Activated B cell treated with CpG ODN at 0.5 μM for 24 hours (primary cell): ENCODE measurements at regions of chr17 and their contacts with region 1.

Region 1: DNA sequence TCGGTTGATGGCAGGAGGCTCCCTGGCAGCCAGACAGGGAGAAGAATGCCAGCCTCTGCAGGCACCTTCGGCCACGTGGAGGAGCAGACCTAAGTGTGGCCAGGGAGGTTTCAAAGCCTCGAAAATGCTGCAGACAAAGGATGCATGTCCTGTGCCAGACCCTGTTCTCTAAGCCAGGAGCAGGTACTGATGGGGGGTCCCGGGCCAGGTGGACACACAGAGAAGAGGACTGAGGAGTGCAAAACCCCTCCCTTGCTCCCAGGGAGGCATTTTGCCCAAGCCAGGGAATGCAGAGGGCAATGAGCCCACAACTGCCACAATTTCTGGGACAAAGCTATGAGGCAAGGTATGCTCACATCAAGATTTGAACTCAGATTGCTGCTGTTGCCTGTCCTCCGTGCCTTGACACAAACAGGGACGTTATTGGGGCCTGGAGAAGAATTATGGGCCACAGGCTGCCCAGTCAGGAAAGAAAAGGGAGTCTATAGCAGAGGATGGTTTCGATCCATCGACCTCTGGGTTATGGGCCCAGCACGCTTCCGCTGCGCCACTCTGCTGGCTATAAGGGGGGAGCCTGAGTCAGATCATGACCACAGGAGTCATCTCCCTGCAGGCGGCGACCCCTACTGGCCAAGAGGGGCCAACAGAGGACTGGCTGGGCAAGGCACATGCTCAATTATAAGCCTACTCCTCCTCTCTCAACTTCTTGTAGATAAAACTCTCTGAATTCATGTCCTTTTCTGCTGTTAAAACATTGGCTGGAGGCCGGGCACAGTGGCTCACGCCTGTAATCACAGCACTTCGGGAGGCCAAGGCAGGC is 25.1 kb upstream of the FOXK2 start:
- DNase-seq: peak; percentile 88
- ATAC-seq: peak; percentile 78
- H3K4me3 Mint-ChIP-seq: peak overlapping the region; percentile 75
- H3K27ac Mint-ChIP-seq: peak overlapping the region; percentile 93
- H3K4me1 Mint-ChIP-seq: peaks cover 26% of the 10 kb centered on the region
- H3K27me3 Mint-ChIP-seq: no peaks in the 10 kb centered on the region
- CTCF ChIP-seq: no peak

Region 2: DNA sequence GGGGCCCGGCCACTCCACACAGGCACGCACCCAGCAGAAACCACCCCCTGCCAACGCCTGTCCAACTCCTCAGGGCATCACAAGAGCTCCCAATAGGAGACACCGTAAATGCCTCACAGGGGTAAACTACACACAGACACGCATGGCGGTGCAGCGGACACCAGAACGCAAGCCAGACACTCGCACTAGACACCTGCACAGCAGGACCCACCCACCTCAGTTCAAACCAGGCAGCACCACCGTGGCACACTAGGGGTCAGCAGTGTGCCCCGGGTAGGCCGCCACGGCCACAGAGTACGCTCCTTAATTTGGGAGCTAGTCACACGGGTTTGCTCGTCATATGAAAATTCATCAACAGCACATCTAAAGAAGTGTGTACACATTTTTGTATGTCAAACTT is 1202.8 kb before region 1 on chr17:
- CTCF ChIA-PET with region 1: no interaction called
- POLR2A ChIA-PET with region 1: no interaction called
- intact Hi-C with region 1: no loop called
- DNase-seq: peak; percentile 70
- ATAC-seq: peak; percentile 74
- H3K4me3 Mint-ChIP-seq: peak overlapping the region; percentile 55
- H3K27ac Mint-ChIP-seq: no peak overlapping the region
- H3K4me1 Mint-ChIP-seq: peaks cover 45% of the 10 kb centered on the region
- H3K27me3 Mint-ChIP-seq: no peaks in the 10 kb centered on the region
- CTCF ChIP-seq: peak; percentile 76

Region 3: GRCh38 chr17:82292251-82293154 is 201.9 kb before region 1 on chr17:
- CTCF ChIA-PET with region 1: no interaction called
- POLR2A ChIA-PET with region 1: interaction called, 3 read pairs
- intact Hi-C with region 1: loop called (anchors 10 kb)
- DNase-seq: peak; percentile 81
- ATAC-seq: peak; percentile 91
- H3K4me3 Mint-ChIP-seq: peak overlapping the region; percentile 87
- H3K27ac Mint-ChIP-seq: peak overlapping the region; percentile 84
- H3K4me1 Mint-ChIP-seq: peaks cover 38% of the 10 kb centered on the region
- H3K27me3 Mint-ChIP-seq: no peaks in the 10 kb centered on the region
- CTCF ChIP-seq: no peak

Region 4: GRCh38 chr17:82450170-82451106 is 44.0 kb before region 1 on chr17 and contains the start of gene CYBC1:
- CTCF ChIA-PET with region 1: no interaction called
- POLR2A ChIA-PET with region 1: interaction called, 20 read pairs
- intact Hi-C with region 1: loop called (anchors 1 kb)
- DNase-seq: peak; percentile 96
- ATAC-seq: peak; percentile 42
- H3K4me3 Mint-ChIP-seq: peak within 1 kb of the TSS; percentile 94
- H3K27ac Mint-ChIP-seq: peak within 1 kb of the TSS; percentile 97
- H3K4me1 Mint-ChIP-seq: peaks cover 42% of the 10 kb centered on the region
- H3K27me3 Mint-ChIP-seq: no peaks in the 10 kb centered on the region
- CTCF ChIP-seq: no peak
- total RNA-seq, gene CYBC1: 405 and 501 TPM in 2 replicates

Region 5: DNA sequence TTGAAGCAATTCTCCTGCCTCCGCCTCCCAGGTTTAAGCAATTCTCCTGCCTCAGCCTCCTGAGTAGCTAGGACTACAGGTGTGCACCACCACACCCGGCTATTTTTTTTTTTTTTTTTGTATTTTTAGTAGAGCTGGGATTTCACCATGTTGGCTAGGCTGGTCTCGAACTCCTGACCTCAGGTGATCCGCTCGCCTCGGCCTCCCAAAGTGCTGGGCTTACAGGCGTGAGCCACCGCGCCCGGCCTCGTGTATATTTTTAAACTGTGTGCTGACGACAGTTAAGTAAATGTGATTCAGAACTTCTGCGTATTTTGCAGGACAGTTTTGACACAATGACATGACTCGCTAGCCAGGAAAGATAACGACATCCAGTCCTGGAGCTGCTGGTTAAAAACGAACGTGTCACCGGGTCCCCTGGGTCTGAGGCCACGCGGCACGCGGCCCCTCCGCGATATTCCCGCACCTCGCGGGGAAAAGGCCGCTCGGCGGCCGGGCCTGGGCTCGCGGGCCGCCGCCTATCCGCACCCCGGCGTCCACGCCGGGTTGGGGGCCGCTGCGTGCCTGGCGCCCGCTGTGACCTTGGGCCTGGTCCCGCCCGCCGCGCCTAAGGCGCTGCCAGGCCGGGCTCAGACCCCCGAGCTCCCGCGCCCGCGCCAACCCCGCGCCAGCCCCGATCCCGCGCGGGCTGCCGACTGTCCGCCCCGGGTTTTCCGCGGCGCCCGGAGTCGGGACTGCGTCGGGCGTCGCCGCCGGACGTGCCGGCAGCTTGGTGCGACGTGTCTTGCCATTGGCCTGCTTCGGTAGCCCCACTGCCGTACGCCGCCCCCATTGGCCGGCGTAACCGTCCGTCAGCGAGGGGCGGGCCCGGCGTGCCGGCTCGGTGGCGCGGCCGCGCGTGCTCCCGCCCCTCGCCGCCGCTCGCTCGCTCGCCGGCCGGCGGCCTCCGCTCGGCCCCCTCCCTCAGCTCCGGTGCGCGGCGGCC is 24.7 kb after region 1 on chr17 and contains the start of gene FOXK2:
- CTCF ChIA-PET with region 1: interaction called, 3 read pairs
- POLR2A ChIA-PET with region 1: interaction called, 43 read pairs
- intact Hi-C with region 1: loop called (anchors 1 kb)
- DNase-seq: peak; percentile 99
- ATAC-seq: peak; percentile 96
- H3K4me3 Mint-ChIP-seq: peak within 1 kb of the TSS; percentile 86
- H3K27ac Mint-ChIP-seq: peak within 1 kb of the TSS; percentile 89
- H3K4me1 Mint-ChIP-seq: peaks cover 25% of the 10 kb centered on the region
- H3K27me3 Mint-ChIP-seq: no peaks in the 10 kb centered on the region
- CTCF ChIP-seq: no peak
- total RNA-seq, gene FOXK2: 56.4 and 60.4 TPM in 2 replicates

Region 6: DNA sequence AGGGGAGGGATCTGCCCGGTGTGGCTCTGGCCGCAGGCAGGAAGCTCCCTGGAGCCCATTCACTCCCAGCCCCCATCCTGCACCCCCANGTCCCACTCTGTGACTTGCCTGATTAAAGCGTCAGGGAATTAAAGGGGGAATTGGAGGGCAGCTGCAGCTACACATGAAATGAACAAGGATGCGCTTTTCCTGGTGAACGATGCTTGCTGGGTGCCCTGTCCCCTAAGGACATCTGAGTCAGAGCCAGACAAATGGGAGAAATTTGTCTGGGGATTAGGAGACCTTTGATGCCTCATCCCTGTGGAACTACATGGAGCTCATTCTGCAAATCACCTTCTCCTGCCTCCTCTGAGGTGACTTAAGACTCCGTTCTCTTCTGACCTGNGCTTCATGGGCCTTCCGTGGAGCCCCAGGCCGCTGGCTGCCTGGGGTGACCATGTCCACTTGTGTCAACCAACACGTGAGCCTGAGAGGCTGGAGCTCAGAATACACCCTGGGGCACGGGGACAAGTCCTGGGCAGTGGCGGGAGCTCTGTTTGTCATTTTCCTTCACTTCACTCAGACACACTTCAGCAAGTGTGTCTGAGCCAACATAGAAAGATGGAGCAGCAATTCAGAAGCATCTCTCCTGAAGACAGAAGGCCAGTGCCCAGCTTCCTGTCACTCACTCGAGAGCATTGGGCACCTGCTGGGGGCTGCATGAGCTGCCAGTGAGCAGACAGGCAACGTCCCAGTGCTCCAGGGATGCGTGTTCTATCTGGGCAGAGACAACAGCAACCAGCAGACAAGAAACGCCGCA is 639.1 kb after region 1 on chr17:
- CTCF ChIA-PET with region 1: no interaction called
- POLR2A ChIA-PET with region 1: interaction called, 11 read pairs
- intact Hi-C with region 1: no loop called
- DNase-seq: peak; percentile 10
- ATAC-seq: no peak
- H3K4me3 Mint-ChIP-seq: no peak overlapping the region
- H3K27ac Mint-ChIP-seq: no peak overlapping the region
- H3K4me1 Mint-ChIP-seq: no peaks in the 10 kb centered on the region
- H3K27me3 Mint-ChIP-seq: peaks cover 4% of the 10 kb centered on the region
- CTCF ChIP-seq: no peak